ENCODE measurements at regions of chr7 and their contacts with region 1.

Region 1: GRCh38 chr7:124452186-124452585 is 313.4 kb downstream of the GPR37 start:
- DNase-seq: peak; percentile 45
- ATAC-seq: no peak
- H3K4me3 ChIP-seq: no peak overlapping the region
- H3K27ac ChIP-seq: no peak overlapping the region
- H3K4me1 ChIP-seq: 0 out of 2 replicates have a peak, but pooled peaks cover 2% of the 10 kb centered on the region
- H3K27me3 ChIP-seq: no peaks in the 10 kb centered on the region
- CTCF ChIP-seq: no peak
- POLR2A ChIP-seq: no peak
- RAD21 ChIP-seq: no peak

Region 2: GRCh38 chr7:124100656-124101055 is 351.5 kb before region 1 on chr7:
- CTCF ChIA-PET with region 1: no interaction called
- POLR2A ChIA-PET with region 1: no interaction called
- dilution Hi-C with region 1: no loop called
- in situ Hi-C with region 1: no loop called
- intact Hi-C with region 1: no loop called
- DNase-seq: no peak
- ATAC-seq: no peak
- H3K4me3 ChIP-seq: no peak overlapping the region
- H3K27ac ChIP-seq: no peak overlapping the region
- H3K4me1 ChIP-seq: no peaks in the 10 kb centered on the region
- H3K27me3 ChIP-seq: no peaks in the 10 kb centered on the region
- CTCF ChIP-seq: no peak
- POLR2A ChIP-seq: no peak
- RAD21 ChIP-seq: no peak

Region 3: GRCh38 chr7:124310934-124311390 is 141.2 kb before region 1 on chr7:
- CTCF ChIA-PET with region 1: no interaction called
- POLR2A ChIA-PET with region 1: no interaction called
- dilution Hi-C with region 1: no loop called
- in situ Hi-C with region 1: no loop called
- intact Hi-C with region 1: no loop called
- DNase-seq: peak; percentile 39
- ATAC-seq: peak; percentile 37; the same call in 1 of the 2 replicates
- H3K4me3 ChIP-seq: no peak overlapping the region
- H3K27ac ChIP-seq: peak overlapping the region; percentile 45; the same call in 1 of the 2 replicates
- H3K4me1 ChIP-seq: peaks cover 4% of the 10 kb centered on the region
- H3K27me3 ChIP-seq: no peaks in the 10 kb centered on the region
- CTCF ChIP-seq: no peak
- POLR2A ChIP-seq: no peak
- RAD21 ChIP-seq: no peak

Region 4: GRCh38 chr7:124411796-124412195 is 40.4 kb before region 1 on chr7:
- CTCF ChIA-PET with region 1: no interaction called
- POLR2A ChIA-PET with region 1: no interaction called
- dilution Hi-C with region 1: no loop called
- in situ Hi-C with region 1: no loop called
- intact Hi-C with region 1: loop called (anchors 1 kb)
- DNase-seq: no peak
- ATAC-seq: no peak
- H3K4me3 ChIP-seq: no peak overlapping the region
- H3K27ac ChIP-seq: no peak overlapping the region
- H3K4me1 ChIP-seq: 0 out of 2 replicates have a peak, but pooled peaks cover 2% of the 10 kb centered on the region
- H3K27me3 ChIP-seq: no peaks in the 10 kb centered on the region
- CTCF ChIP-seq: no peak
- POLR2A ChIP-seq: no peak
- RAD21 ChIP-seq: no peak

Region 5: DNA sequence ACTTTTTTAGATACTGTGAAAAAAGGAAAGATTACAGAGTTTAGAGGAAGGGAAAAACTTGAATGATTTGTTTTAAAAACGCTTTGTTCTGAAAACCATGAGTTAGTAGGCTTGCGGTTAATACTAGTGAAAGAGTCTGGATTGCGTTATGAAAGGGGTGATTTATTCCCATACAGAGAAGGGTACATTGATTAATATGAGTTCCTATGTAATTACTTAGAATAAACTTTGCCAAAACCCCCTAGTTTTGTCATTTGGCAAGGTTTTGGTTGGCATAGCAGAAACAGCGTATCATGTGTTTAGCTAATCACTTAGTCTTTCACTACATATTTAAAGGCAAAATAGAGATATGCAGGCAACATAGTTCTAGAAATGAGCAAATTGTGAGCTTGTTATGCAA is 568.6 kb after region 1 on chr7:
- CTCF ChIA-PET with region 1: no interaction called
- POLR2A ChIA-PET with region 1: no interaction called
- dilution Hi-C with region 1: no loop called
- in situ Hi-C with region 1: no loop called
- intact Hi-C with region 1: no loop called
- DNase-seq: no peak
- ATAC-seq: no peak
- H3K4me3 ChIP-seq: no peak overlapping the region
- H3K27ac ChIP-seq: no peak overlapping the region
- H3K4me1 ChIP-seq: no peaks in the 10 kb centered on the region
- H3K27me3 ChIP-seq: no peaks in the 10 kb centered on the region
- CTCF ChIP-seq: no peak
- POLR2A ChIP-seq: no peak
- RAD21 ChIP-seq: no peak